ENCODE measurements at regions of chr3 and their contacts with region 1.

Region 1: DNA sequence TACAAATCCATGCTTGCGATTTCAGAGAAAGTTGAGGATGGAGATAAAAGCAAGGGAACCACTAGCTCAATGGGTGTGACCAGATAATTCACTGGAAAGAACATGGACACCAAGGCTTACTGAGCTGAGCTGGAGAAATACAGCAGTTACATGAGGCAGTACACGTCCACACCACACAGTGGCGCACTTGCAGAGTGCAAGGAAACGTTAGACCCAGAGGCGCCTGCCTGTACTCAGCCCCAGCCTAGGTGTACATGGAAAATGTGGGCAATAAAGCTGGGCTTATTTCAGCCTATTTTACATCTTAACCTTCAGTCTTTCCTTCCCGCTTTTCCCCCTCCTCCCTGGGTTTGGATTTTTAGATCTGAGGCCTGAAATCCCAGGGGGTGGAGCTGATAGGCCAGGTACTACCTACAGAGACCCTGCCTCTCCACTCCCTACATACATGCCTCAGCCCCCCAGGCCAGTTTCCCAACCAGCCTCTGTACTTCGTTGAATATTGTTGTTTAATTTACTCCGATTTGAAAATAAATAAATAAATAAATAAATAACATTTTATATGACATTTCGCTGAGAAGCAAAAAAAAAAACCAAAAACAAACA is 60.1 kb downstream of the PCOLCE2 start:
- DNase-seq: peak; percentile 57
- H3K27ac ChIP-seq: no peak overlapping the region
- CTCF ChIP-seq: peak; percentile 93

Region 2: DNA sequence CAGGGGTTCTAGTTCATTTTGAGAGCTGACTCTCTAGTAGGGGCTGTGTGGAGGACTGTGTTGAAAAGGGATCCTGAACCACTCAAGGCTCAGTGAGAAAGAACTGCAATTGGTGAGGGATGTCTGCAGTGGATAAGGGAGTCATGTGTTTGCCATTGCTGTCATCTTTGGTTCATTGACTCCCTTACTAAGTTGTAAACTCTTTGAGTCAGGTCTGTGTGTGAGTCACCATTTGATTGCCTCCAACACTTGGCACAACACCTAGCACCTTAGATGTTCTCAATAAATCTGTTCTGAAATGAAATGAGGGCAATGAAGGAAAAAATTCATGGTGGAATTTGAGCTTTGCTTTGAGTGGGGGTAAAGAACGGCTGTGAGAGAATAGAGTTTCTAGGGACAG is 180.9 kb before region 1 on chr3:
- CTCF ChIA-PET with region 1: no interaction called
- POLR2A ChIA-PET with region 1: no interaction called
- DNase-seq: peak; percentile 66
- H3K27ac ChIP-seq: no peak overlapping the region
- CTCF ChIP-seq: no peak

Region 3: DNA sequence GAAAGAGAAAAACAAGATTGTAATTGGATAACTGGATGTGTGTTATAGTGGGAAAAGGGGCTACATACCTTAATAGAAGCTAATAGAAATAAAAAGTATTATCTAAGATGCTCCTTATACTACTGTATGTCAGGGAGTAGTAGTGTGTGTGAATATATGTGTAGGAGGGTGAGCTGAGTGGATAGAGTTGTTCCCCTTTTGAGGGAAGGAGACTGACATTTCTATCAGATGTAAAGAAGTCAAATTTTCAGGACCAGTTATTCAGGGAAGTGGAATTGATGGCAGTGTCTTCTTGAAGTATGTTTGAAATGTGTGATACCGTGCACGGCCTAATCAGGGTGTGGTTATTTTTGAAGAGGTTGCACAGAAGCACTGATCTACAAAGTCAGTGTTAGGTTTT is 11.0 kb after region 1 on chr3:
- CTCF ChIA-PET with region 1: interaction called, 10 read pairs
- POLR2A ChIA-PET with region 1: no interaction called
- DNase-seq: no peak
- H3K27ac ChIP-seq: no peak overlapping the region
- CTCF ChIP-seq: no peak

Region 4: DNA sequence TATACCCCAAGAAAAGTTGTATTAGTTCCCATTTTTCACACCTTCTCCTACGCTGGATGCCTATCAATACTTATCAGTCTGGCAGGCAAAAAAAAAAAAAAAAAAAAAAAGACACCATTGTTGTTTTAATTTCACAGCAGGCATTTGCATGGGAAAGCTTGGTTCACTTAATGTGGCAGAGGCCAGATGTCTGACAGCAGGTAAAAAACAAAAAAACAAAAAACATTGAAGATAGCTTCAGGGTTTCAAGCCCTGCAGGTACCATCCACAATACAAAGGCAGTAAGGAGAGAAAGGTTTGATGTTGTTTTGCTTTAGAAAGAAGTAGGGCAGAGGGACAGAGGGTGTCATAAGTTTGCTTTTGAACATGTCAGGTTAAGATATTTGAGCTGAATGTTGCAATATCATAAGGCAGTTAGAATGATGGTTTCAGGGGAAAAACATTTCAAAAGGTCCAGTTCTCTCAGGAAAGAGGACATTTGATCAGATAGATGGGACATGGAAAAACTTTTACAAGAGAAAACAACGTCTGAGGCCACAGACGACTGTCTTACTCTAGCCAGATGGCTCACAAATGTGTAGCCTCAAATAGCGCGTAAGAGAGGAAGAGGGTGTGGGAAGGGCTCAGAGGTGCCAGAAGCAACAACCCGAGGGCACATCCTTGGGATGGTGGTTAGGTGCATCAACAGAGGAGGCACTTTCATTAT is 34.4 kb after region 1 on chr3:
- CTCF ChIA-PET with region 1: interaction called, 12 read pairs
- POLR2A ChIA-PET with region 1: no interaction called
- DNase-seq: peak; percentile 62
- H3K27ac ChIP-seq: peak overlapping the region; percentile 81
- CTCF ChIP-seq: no peak

Region 5: GRCh38 chr3:142929109-142929508 is 100.3 kb after region 1 on chr3:
- CTCF ChIA-PET with region 1: no interaction called
- POLR2A ChIA-PET with region 1: no interaction called
- DNase-seq: peak; percentile 66
- H3K27ac ChIP-seq: no peak overlapping the region
- CTCF ChIP-seq: peak; percentile 28; the same call in 1 of the 2 replicates

Region 6: GRCh38 chr3:142983318-142983717 is 154.5 kb after region 1 on chr3:
- CTCF ChIA-PET with region 1: interaction called, 15 read pairs
- POLR2A ChIA-PET with region 1: no interaction called
- DNase-seq: no peak
- H3K27ac ChIP-seq: no peak overlapping the region
- CTCF ChIP-seq: no peak

Region 7: DNA sequence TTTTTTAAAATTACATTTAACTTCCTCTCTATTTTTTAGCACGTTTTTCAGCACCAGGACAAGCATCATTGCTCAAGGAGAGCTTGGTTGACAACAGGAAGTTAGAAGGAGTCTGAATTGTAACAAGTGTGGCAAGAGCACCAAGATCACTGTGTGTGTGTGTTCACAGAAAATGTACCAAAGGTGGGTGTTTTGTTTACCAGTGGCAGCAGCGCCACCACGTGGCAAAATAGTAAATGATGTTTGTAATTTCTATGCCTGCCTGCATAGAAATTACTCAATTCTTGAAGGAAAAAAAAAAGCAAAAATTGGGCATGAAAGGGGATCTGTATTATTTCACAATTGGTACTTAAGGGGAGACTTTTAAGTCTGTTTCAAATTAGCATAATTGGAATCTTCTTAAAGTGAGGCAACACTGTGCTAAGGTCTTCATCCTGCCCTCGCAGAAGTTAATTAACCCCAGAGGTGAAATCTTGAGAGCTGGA is 165.2 kb after region 1 on chr3:
- CTCF ChIA-PET with region 1: interaction called, 11 read pairs
- POLR2A ChIA-PET with region 1: no interaction called
- DNase-seq: peak; percentile 54
- H3K27ac ChIP-seq: no peak overlapping the region
- CTCF ChIP-seq: peak; percentile 82